Activated T-helper 1 cell treated with anti-CD3 and anti-CD28 coated beads, Interleukin-12 subunit alpha, Interleukin-12 subunit beta, Interleukin-2, Interleukin-4 antibody, amounts not matched to agents 30 ng/mL and 10 ng/mL and 1 ng/mL, durations not matched to agents 14 hours and 24 hours and 36 hours (primary cell): ENCODE measurements at regions of chr3 and their contacts with region 1.

Region 1: GRCh38 chr3:197305854-197306253 is 7.4 kb upstream of the DLG1 start:
- DNase-seq: no peak
- H3K4me3 Mint-ChIP-seq: peak overlapping the region; percentile 19
- H3K27ac Mint-ChIP-seq: peak overlapping the region; percentile 10
- H3K4me1 Mint-ChIP-seq: peaks cover 45% of the 10 kb centered on the region
- H3K27me3 Mint-ChIP-seq: peaks cover 20% of the 10 kb centered on the region

Region 2: GRCh38 chr3:197292083-197292646 is 13.7 kb before region 1 on chr3:
- intact Hi-C with region 1: loop called (anchors 2 kb)
- DNase-seq: no peak
- H3K4me3 Mint-ChIP-seq: no peak overlapping the region
- H3K27ac Mint-ChIP-seq: no peak overlapping the region
- H3K4me1 Mint-ChIP-seq: peaks cover 51% of the 10 kb centered on the region
- H3K27me3 Mint-ChIP-seq: no peaks in the 10 kb centered on the region

Region 3: GRCh38 chr3:197325773-197326172 is 19.9 kb after region 1 on chr3:
- intact Hi-C with region 1: loop called (anchors 2 kb)
- DNase-seq: no peak
- H3K4me3 Mint-ChIP-seq: no peak overlapping the region
- H3K27ac Mint-ChIP-seq: no peak overlapping the region
- H3K4me1 Mint-ChIP-seq: peaks cover 8% of the 10 kb centered on the region
- H3K27me3 Mint-ChIP-seq: peaks cover 6% of the 10 kb centered on the region

Region 4: GRCh38 chr3:197847866-197848401 is 542.1 kb after region 1 on chr3:
- intact Hi-C with region 1: no loop called
- DNase-seq: peak; percentile 18
- H3K4me3 Mint-ChIP-seq: peak overlapping the region; percentile 52
- H3K27ac Mint-ChIP-seq: peak overlapping the region; percentile 83
- H3K4me1 Mint-ChIP-seq: peaks cover 30% of the 10 kb centered on the region
- H3K27me3 Mint-ChIP-seq: no peaks in the 10 kb centered on the region